PC-3 (cell line): ENCODE measurements at regions of chr21 and their contacts with region 1.

Region 1: GRCh38 chr21:43659136-43660000 is at the starts of genes HSF2BP and RRP1B:
- DNase-seq: peak; percentile 90
- ATAC-seq: peak; percentile 88
- H3K4me3 ChIP-seq: peak within 1 kb of the TSS; percentile 86
- H3K27ac ChIP-seq: peak within 1 kb of the TSS; percentile 41
- H3K4me1 ChIP-seq: peaks cover 37% of the 10 kb centered on the region
- H3K27me3 ChIP-seq: no peaks in the 10 kb centered on the region
- CTCF ChIP-seq: no peak; the same call in 1 of the 2 replicates
- total RNA-seq, gene HSF2BP: 1.2 and 2.4 TPM in 2 replicates
- total RNA-seq, gene RRP1B: 44.2 and 53.0 TPM in 2 replicates

Region 2: DNA sequence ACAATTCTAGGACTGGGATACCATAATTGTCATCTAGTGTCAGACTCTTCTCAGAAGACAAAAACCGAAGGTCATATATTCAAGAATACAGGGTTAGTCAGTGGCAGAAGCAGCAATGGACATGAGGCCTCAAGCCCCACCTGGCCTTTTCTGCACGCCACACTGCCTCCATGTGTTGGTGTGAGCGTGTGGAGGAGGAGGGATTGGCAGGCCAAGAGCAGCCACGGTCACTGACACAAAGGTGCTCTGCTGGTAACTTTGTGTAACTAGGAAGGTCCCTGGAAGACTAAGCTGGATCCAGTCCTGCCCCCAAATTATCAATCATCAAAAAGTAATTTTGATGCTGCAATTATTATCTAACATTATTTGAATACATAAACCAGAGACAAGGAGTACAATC is 35.0 kb before region 1 on chr21:
- CTCF ChIA-PET with region 1: no interaction called
- POLR2A ChIA-PET with region 1: no interaction called
- intact Hi-C with region 1: no loop called
- DNase-seq: no peak
- ATAC-seq: no peak
- H3K4me3 ChIP-seq: no peak overlapping the region
- H3K27ac ChIP-seq: no peak overlapping the region
- H3K4me1 ChIP-seq: peaks cover 5% of the 10 kb centered on the region
- H3K27me3 ChIP-seq: no peaks in the 10 kb centered on the region
- CTCF ChIP-seq: no peak

Region 3: DNA sequence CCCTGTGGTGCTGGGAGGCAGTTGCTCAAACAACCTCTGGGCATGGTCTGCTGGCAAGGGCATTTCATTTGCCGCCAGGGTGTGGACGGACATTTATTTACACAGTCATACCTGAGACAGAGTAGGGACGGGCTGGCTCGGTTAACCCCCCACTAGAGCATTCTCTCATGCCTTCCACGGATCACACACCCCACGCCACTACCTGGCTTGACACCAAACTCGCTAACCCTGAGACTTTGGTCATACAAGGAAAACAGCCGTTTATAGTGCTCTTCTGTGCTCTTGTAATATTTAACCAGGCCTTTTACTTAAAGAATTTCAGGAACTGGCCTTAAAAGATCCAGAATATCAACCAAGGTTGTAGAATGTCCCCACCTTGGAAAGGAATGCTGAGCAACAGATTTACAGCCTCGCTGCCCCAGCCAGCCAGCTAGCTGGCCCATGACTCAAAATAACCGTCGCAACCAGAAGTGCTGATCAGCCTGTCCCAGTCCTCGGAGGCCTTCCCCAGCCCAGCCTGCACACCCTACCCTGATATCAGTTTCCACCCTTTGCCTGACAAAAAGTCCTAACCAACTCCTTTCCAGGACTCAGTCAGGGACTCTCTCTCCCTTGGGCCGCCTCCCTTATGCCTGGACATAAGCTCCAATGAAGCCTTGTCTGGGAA is 53.1 kb after region 1 on chr21:
- CTCF ChIA-PET with region 1: no interaction called
- POLR2A ChIA-PET with region 1: no interaction called
- intact Hi-C with region 1: loop called (anchors 1 kb)
- DNase-seq: peak; percentile 98
- ATAC-seq: peak; percentile 93
- H3K4me3 ChIP-seq: peak overlapping the region; percentile 56
- H3K27ac ChIP-seq: peak overlapping the region; percentile 94
- H3K4me1 ChIP-seq: peaks cover 28% of the 10 kb centered on the region
- H3K27me3 ChIP-seq: no peaks in the 10 kb centered on the region
- CTCF ChIP-seq: no peak